ENCODE measurements at regions of chr1 and their contacts with region 1.

Region 1: DNA sequence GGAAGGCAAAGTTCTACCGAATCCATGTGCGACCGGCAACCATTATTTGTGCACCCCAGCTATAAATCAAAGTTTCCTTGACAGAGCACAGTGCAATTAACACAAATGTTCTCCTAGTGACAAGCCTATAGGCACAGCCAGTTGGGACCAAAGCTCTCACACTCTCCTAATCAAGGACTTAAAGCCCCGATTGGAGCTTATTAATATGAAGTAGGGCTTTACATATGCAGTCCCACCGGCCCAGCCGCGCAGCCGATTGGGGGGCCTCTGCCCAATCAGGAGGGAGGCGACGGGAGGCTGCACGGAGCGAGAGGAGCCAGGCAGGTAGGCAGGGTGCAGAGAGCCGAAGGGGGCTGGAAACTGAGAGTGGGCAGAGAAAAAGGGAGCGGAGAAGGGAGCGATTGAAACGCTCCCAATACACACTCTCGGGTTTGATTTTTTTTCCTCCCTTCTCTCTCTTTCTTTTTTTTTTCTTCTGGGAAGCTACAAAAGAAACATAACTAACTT is at the start of gene ESRRG:
- DNase-seq: peak; percentile 81
- ATAC-seq: peak; percentile 95
- total RNA-seq, gene ESRRG: 46.2 TPM

Region 2: DNA sequence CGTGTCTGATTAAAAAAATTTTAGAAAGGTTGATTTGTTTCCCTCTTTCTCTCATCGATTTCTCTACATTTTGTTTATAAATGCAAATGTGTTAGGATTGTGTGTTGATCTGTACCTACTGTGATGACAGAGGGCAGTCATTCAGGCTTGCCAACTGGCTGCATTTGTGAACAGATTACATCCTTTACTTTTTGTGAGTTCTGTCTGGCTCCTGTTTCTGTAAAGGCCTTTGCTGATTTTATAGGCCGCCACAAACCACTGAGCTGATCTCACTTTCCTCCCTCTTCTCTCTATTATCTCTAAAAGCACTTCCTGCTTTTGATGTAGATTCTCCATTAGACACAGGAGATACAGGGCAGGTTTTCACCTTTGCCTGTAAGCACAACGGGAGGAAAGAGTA is 106.9 kb before region 1 on chr1:
- intact Hi-C with region 1: loop called (anchors 5 kb)
- DNase-seq: no peak
- ATAC-seq: peak; percentile 56

Region 3: GRCh38 chr1:216702170-216702569 is 21.2 kb before region 1 on chr1:
- intact Hi-C with region 1: no loop called
- DNase-seq: no peak
- ATAC-seq: no peak